ENCODE measurements at regions of chr20 and their contacts with region 1.

Region 1: GRCh38 chr20:18188434-18188833 is 50.8 kb downstream of the KAT14 start:
- DNase-seq: no peak
- H3K4me3 ChIP-seq: no peak overlapping the region
- H3K27me3 ChIP-seq: no peaks in the 10 kb centered on the region
- CTCF ChIP-seq: no peak

Region 2: GRCh38 chr20:18174906-18175683 is 13.3 kb before region 1 on chr20:
- CTCF ChIA-PET with region 1: interaction called, 4 read pairs
- POLR2A ChIA-PET with region 1: interaction called, 15 read pairs
- DNase-seq: no peak
- H3K4me3 ChIP-seq: no peak overlapping the region
- H3K27me3 ChIP-seq: no peaks in the 10 kb centered on the region
- CTCF ChIP-seq: no peak

Region 3: GRCh38 chr20:19213946-19214490 is 1025.6 kb after region 1 on chr20:
- CTCF ChIA-PET with region 1: no interaction called
- POLR2A ChIA-PET with region 1: no interaction called
- DNase-seq: no peak
- H3K4me3 ChIP-seq: no peak overlapping the region
- H3K27me3 ChIP-seq: peaks cover 16% of the 10 kb centered on the region
- CTCF ChIP-seq: no peak

Measured in BJ (cell line).